Activated CD4-positive, alpha-beta T cell treated with anti-CD3 and anti-CD28 coated beads, Interleukin-2, amount 10 ng/mL, durations not matched to agents 7 days and 5 days (primary cell): ENCODE measurements at regions of chr2 and their contacts with region 1.

Region 1: DNA sequence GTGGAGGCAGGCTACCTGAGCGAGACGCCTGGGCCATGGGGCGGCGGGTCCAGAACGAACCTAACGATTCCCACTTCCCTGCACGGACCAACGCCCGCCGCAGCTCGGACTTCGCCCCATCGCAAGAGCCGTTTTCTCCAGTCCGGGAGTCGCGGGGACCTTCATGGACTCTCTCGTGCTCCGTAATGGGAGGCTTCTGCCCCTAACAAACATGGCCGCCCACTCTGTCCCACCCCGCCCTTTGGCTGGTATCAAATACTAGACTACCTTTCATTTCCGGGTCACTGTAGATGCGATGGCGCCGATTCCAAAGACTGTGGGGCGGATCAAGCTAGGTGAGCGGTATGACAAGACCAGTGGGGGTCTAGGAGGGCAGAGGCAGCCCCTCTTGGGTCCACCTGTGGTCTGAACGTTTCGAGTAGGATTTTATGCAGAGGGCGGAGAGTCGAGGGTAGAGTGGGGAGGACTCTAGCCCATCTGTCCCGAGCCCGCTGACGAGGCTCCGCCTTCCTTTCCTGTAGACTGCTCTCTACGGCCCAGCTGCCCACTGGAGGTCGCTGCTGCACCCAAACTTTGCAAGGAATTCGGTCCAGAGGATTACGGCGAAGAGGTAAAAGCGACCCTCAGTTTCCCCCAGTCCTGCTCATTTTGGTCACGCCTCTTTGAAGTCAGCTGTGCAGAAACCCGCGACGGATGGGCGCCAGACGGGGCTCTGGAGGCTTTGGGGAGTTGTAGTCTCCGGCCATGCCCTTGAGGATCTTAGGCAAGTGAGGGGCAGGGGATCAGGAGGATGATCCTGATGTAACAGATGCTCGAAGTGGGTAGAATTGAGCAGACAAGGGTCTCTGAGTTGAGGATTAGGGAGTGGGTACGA is at the starts of genes CCDC142 and TTC31:
- DNase-seq: peak; percentile 96
- H3K4me3 Mint-ChIP-seq: peak within 1 kb of the TSS; percentile 99
- H3K27ac Mint-ChIP-seq: peak within 1 kb of the TSS; percentile 99
- H3K4me1 Mint-ChIP-seq: peaks cover 40% of the 10 kb centered on the region
- H3K27me3 Mint-ChIP-seq: no peaks in the 10 kb centered on the region
- total RNA-seq, gene CCDC142: 26.8 to 27.1 TPM
- total RNA-seq, gene TTC31: 45.8 to 46.3 TPM

Region 2: GRCh38 chr2:74364533-74365505 is 118.2 kb before region 1 on chr2:
- CTCF ChIA-PET with region 1: no interaction called
- POLR2A ChIA-PET with region 1: no interaction called
- DNase-seq: no peak
- H3K4me3 Mint-ChIP-seq: no peak overlapping the region
- H3K27ac Mint-ChIP-seq: no peak overlapping the region
- H3K4me1 Mint-ChIP-seq: no peaks in the 10 kb centered on the region
- H3K27me3 Mint-ChIP-seq: no peaks in the 10 kb centered on the region

Region 3: GRCh38 chr2:74458132-74458925 is 24.7 kb before region 1 on chr2 and contains the start of gene WBP1:
- CTCF ChIA-PET with region 1: interaction called, 66 read pairs
- POLR2A ChIA-PET with region 1: no interaction called
- DNase-seq: peak; percentile 100
- H3K4me3 Mint-ChIP-seq: peak within 1 kb of the TSS; percentile 91
- H3K27ac Mint-ChIP-seq: peak within 1 kb of the TSS; percentile 98
- H3K4me1 Mint-ChIP-seq: peaks cover 62% of the 10 kb centered on the region
- H3K27me3 Mint-ChIP-seq: no peaks in the 10 kb centered on the region
- total RNA-seq, gene WBP1: 52.5 to 52.6 TPM

Region 4: GRCh38 chr2:74472086-74472944 is 10.7 kb before region 1 on chr2 and contains the start of gene MRPL53:
- CTCF ChIA-PET with region 1: interaction called, 19 read pairs
- POLR2A ChIA-PET with region 1: interaction called, 5 read pairs
- DNase-seq: peak; percentile 97
- H3K4me3 Mint-ChIP-seq: peak within 1 kb of the TSS; percentile 91
- H3K27ac Mint-ChIP-seq: peak within 1 kb of the TSS; percentile 98
- H3K4me1 Mint-ChIP-seq: peaks cover 34% of the 10 kb centered on the region
- H3K27me3 Mint-ChIP-seq: no peaks in the 10 kb centered on the region
- total RNA-seq, gene MRPL53: 72.5 to 83.1 TPM

Region 5: DNA sequence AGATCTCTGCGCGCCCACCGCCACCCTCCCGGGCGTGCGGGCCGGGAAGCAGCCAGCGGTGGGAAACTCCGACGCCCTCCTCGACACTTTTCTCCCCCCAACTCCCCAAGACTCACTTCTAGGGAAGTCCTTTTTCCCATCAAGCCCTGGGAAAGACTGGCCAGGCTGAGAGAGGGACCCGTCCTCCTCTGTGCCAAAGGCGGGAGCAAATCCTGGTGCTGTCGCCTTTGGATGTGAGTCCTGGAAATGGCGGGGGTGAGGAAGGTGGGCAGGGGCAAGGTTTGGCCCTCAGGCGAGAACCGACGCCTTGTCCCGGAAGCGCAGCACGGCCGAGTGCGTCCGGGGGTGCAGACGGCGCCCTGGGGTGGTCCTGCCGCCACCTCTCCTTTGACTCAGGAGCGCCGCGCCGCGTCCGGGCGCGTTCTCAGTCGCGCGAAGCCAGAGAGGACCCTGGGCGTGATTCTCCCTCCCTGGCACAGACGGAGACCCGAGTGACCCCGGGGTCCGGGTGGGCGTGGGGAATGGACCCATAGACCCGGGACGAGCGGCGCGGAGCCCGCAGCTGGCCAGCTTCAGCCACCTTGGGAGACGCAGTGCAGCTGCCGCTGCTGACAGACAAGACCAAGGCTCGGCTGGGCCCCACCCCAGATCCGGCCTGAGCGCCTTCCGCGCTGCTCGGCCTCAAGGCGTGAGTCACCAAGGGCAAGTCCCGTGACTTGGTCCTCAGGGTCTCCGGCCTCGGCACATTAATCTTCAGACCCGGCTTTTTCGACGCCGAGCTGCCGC is 19.9 kb after region 1 on chr2:
- CTCF ChIA-PET with region 1: interaction called, 38 read pairs
- POLR2A ChIA-PET with region 1: interaction called, 3 read pairs
- DNase-seq: peak; percentile 38
- H3K4me3 Mint-ChIP-seq: peak overlapping the region; percentile 54
- H3K27ac Mint-ChIP-seq: no peak overlapping the region
- H3K4me1 Mint-ChIP-seq: peaks cover 67% of the 10 kb centered on the region
- H3K27me3 Mint-ChIP-seq: peaks cover 58% of the 10 kb centered on the region

Region 6: GRCh38 chr2:74529357-74530238 is 46.6 kb after region 1 on chr2 and contains the starts of genes AUP1 and HTRA2:
- CTCF ChIA-PET with region 1: interaction called, 22 read pairs
- POLR2A ChIA-PET with region 1: no interaction called
- DNase-seq: peak; percentile 92
- H3K4me3 Mint-ChIP-seq: peak within 1 kb of the TSS; percentile 98
- H3K27ac Mint-ChIP-seq: peak within 1 kb of the TSS; percentile 97
- H3K4me1 Mint-ChIP-seq: peaks cover 57% of the 10 kb centered on the region
- H3K27me3 Mint-ChIP-seq: no peaks in the 10 kb centered on the region
- total RNA-seq, gene AUP1: 116 to 136 TPM
- total RNA-seq, gene HTRA2: 41.6 to 45.8 TPM

Region 7: GRCh38 chr2:74573747-74574562 is 90.9 kb after region 1 on chr2:
- CTCF ChIA-PET with region 1: interaction called, 23 read pairs
- POLR2A ChIA-PET with region 1: no interaction called
- DNase-seq: peak; percentile 56
- H3K4me3 Mint-ChIP-seq: peak overlapping the region; percentile 28
- H3K27ac Mint-ChIP-seq: peak overlapping the region; percentile 67
- H3K4me1 Mint-ChIP-seq: peaks cover 33% of the 10 kb centered on the region
- H3K27me3 Mint-ChIP-seq: no peaks in the 10 kb centered on the region

Region 8: GRCh38 chr2:74587664-74588277 is 104.7 kb after region 1 on chr2:
- CTCF ChIA-PET with region 1: interaction called, 25 read pairs
- POLR2A ChIA-PET with region 1: no interaction called
- DNase-seq: peak; percentile 70
- H3K4me3 Mint-ChIP-seq: no peak overlapping the region
- H3K27ac Mint-ChIP-seq: no peak overlapping the region
- H3K4me1 Mint-ChIP-seq: peaks cover 30% of the 10 kb centered on the region
- H3K27me3 Mint-ChIP-seq: peaks cover 28% of the 10 kb centered on the region

Region 9: DNA sequence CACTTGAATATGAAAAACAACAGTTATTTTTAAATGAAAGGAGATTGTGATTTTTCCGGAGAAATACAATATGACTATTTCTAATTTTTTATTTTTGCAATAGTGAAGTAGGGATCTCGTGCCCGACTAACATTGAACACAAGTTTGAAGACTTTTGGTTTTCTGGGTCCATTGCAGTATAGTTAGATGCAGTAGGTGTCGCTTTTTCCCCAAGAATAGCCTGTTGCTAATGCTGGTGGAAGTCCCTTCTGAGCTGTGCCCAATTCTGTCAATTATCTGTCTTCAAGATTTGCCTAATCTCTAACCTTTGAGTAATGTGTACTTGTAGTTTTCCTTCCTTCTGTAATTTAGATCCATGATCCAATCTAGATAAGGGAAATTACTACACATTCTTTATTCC is 207.5 kb after region 1 on chr2:
- CTCF ChIA-PET with region 1: no interaction called
- POLR2A ChIA-PET with region 1: no interaction called
- DNase-seq: peak; percentile 48
- H3K4me3 Mint-ChIP-seq: no peak overlapping the region
- H3K27ac Mint-ChIP-seq: no peak overlapping the region
- H3K4me1 Mint-ChIP-seq: no peaks in the 10 kb centered on the region
- H3K27me3 Mint-ChIP-seq: peaks cover 4% of the 10 kb centered on the region